Cardiac septum (tissue), 1 donor: ENCODE measurements at regions of chr3 and their contacts with region 1.

Region 1: DNA sequence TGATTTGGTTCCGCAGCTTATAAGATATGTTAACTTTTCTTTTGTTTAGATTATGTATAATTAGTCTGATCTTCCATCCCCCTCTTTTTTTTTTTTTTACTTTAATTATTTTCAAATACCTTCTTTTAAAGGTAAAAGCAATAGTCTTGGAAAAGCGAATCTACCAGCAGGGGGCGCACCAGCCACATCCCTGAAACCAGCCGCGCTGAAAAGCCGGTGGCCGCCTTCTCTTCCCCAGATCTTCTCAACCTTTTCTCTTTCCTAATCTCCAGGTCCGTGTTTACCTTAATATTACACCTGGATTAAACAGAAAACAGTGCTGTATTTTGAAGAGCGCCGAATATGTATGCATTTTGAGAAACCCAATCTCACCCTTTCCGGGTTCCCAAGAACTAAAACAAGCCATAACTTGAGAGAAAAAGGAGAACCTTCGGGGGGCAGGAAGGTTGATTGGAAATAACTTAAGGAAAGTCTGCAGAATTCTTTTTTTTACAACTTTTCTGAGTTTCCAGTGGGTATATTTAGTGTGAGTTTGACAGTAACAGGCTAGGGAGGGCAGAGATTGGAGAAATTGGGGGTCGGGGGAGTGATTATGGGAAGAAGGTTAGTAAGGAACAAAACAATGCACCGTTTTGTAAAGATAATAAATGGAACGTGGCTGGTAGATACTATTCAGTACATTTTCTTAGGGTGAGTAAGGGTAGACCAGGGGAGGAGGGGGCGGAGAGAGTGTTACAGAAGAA is 2.0 kb upstream of the SOX2 start:
- DNase-seq: no peak

Region 2: DNA sequence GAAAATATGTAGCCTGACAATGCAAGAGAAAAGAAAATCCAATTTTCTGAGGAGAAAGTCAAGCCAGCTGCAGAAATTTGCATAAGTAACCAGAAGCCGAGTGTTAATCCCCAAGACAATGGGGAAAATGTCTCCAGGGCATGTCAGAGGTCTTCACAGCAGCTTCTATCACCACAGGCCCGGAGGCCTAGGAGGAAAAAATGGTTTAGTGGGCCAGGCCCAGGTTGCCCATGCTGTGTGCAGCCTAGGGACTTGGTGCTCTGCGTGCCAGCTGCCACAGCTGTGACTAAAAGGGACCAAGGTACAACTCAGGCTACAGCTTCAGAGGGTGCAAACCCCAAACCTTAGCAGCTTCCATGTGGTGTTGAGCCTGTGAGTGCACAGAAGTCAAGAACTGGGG is 199.2 kb before region 1 on chr3:
- intact Hi-C with region 1: no loop called
- DNase-seq: no peak

Region 3: GRCh38 chr3:181582619-181583018 is 127.1 kb before region 1 on chr3:
- intact Hi-C with region 1: no loop called
- DNase-seq: no peak

Region 4: GRCh38 chr3:181752202-181752671 is 42.5 kb after region 1 on chr3:
- intact Hi-C with region 1: no loop called
- DNase-seq: no peak

Region 5: DNA sequence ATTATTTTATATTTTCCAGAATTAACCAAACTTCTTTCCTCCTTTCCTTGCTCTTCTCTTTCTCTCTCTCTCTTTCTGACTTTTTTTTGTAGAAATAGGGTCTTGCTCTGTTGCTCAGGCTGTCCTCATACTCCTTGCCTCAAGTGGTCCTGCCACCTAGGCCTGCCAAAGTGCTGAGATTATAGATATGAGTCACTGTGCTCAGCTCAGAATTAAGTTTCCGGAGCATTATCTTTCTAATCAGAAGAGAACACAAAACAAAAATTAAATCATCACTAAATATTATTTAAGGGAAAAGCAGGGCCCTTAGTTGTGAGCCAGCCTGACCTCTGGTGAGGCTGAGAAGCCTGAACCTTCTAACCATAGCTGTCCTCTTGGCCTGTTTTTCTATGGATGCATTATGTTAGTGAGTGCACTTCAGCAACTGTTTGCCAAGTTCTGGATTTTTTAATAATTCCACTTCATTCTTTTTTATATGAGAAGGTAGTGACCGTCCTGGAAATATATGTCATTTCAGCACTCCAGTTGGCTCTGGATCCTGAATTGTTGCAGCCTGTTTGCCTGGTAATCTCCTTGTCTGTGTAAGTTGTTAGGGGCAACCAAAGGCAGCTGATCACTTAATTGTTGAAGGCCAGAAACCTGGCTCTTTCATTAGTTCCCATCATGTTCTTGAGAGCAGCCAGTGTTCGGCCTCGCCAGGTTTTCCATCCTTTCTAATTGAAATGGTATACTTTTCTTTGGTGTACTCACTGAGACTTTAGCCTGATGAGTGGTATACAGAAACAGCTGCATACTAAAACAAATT is 170.4 kb after region 1 on chr3:
- intact Hi-C with region 1: no loop called
- DNase-seq: no peak

Region 6: DNA sequence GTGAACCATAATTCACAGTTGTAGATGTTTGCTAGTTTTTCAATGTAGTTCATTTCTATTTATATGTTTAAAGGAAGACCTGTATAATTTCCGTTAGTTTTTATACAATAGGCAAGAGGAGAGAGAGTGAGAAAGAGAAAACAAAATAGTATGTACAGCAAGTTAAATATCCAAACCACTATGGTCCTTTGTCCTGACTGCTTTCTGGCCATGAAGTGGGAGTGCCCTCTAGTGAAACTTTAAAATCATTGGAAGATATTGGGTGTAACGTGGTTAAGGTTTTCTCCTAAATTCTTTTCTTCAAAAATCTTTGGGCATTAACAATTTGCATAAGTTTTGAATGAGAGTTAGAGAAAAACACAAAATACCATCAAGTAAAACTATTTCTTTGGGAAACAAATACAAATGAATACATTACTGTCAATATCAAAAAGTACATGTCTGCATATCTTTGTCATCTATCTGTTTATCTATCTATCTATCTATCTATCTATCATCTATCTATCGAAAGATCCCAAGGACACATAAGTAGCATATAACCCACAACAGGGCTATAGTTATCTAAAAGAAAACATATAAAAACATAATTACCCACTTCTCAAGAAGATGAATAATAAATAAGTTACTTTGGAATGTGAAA is 549.0 kb after region 1 on chr3:
- intact Hi-C with region 1: loop called (anchors 2 kb)
- DNase-seq: no peak

Region 7: GRCh38 chr3:182618085-182618732 is 908.5 kb after region 1 on chr3:
- intact Hi-C with region 1: loop called (anchors 10 kb)
- DNase-seq: no peak

Region 8: GRCh38 chr3:182683453-182683852 is 973.7 kb after region 1 on chr3:
- intact Hi-C with region 1: loop called (anchors 1 kb)
- DNase-seq: no peak